ENCODE measurements at regions of chr15 and their contacts with region 1.

Region 1: DNA sequence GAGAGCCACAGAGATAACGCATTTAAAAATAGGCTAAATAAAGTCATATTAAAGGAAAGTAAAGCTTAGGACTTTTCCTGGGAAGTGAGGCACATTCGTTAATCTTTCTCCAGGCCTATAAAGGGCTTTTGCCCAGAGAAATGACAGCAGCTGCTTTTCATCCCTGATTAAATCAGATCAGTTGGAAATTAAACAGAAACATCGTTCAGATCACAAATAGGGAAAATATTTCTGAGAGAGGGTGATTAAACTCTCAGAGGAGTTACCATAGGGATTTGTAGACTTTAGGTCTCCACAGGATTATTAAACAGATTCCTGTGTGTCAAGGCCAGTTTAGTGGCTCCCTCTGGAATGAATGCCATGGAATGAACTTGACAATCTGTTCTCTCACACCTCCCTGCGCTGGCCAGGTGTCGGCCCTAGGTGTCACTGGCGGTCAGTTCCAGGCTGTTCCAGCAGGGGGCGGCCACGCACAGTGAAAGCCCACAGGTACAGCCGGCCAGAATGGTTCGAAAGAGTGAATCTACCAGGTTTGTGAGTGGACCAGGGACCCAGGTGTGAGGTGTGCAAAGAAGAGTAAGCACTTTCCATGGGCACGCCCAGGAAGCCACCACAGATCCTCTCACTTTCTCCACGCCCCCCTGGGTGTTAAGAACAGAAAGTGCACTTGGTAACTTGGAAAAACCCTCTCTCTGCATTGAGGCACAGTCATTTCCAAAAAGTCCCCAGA is 253.0 kb upstream of the RASGRP1 start:
- DNase-seq: peak; percentile 26 to 57
- ATAC-seq: peak; percentile 45 to 73
- H3K4me3 ChIP-seq: no peak overlapping the region
- H3K27ac ChIP-seq: no peak overlapping the region
- H3K4me1 ChIP-seq: no peaks in the 10 kb centered on the region
- H3K27me3 ChIP-seq: no peaks in the 10 kb centered on the region
- CTCF ChIP-seq: peak; percentile 89 to 95 (median 90)
- POLR2A ChIP-seq: no peak

Region 2: GRCh38 chr15:38991126-38991525 is 173.5 kb after region 1 on chr15:
- in situ Hi-C with region 1: loop called in 1 of 4 experiments (anchors 10 kb)
- intact Hi-C with region 1: loop called (anchors 10 kb)
- DNase-seq: no peak
- ATAC-seq: no peak
- H3K4me3 ChIP-seq: no peak overlapping the region
- H3K27ac ChIP-seq: no peak overlapping the region
- H3K4me1 ChIP-seq: peaks cover 9% of the 10 kb centered on the region in 2 donors
- H3K27me3 ChIP-seq: no peaks in the 10 kb centered on the region
- CTCF ChIP-seq: peak in 2 of 5 experiments; percentile 25 to 33
- POLR2A ChIP-seq: no peak

Region 3: GRCh38 chr15:39022532-39023305 is 205.1 kb after region 1 on chr15:
- in situ Hi-C with region 1: no loop called
- intact Hi-C with region 1: loop called (anchors 5 kb)
- DNase-seq: peak; percentile 14 to 22
- ATAC-seq: peak; percentile 80 to 93
- H3K4me3 ChIP-seq: no peak overlapping the region
- H3K27ac ChIP-seq: peak overlapping the region in 2 of 4 donors; percentile 24 to 51
- H3K4me1 ChIP-seq: peaks cover 3 to 27% of the 10 kb centered on the region in 2 donors
- H3K27me3 ChIP-seq: no peaks in the 10 kb centered on the region
- CTCF ChIP-seq: no peak
- POLR2A ChIP-seq: no peak

Region 4: GRCh38 chr15:39580117-39580484 is 762.5 kb after region 1 on chr15:
- in situ Hi-C with region 1: loop called (anchors 10 to 25 kb)
- intact Hi-C with region 1: loop called (anchors 1 kb)
- DNase-seq: peak; percentile 56 to 82
- ATAC-seq: peak; percentile 84 to 87
- H3K4me3 ChIP-seq: peak overlapping the region; percentile 55 to 63 (median 58)
- H3K27ac ChIP-seq: peak overlapping the region; percentile 66 to 75 (median 68)
- H3K4me1 ChIP-seq: peaks cover 7 to 12% of the 10 kb centered on the region in 2 donors
- H3K27me3 ChIP-seq: peaks cover 0 to 6% (median 4%) of the 10 kb centered on the region in 3 donors
- CTCF ChIP-seq: peak; percentile 83 to 90 (median 86)
- POLR2A ChIP-seq: no peak

Region 5: DNA sequence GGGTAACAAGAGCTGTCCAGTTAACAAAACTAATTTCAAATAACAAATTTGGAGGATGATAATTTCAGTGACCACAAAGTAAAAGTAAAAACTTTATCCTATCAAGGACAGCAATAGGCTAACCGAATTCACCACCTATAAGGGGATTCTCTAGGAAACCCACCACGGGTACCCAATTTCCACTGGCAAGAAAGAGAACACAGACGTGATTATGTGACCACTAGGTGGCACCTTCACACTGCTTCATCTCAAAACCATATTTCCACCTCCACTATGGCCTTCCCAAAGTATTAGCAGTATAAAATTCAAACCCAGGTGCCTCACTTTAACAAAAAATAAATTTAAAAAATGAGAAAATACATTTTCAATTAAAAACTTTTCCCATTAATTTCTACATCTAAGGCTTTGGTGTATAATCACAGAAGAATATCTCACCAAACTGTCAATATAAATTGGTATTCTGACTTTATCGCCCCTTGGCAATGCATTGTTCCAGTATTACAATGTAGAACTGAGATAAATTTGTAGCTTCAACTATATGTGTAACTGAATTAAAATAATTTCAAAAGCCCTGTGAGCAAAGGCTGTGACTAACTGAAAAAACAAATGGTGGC is 868.5 kb after region 1 on chr15:
- in situ Hi-C with region 1: no loop called
- intact Hi-C with region 1: loop called (anchors 10 kb)
- DNase-seq: peak in 1 of 2 donors; percentile 9
- ATAC-seq: peak; percentile 65 to 66
- H3K4me3 ChIP-seq: no peak overlapping the region
- H3K27ac ChIP-seq: no peak overlapping the region
- H3K4me1 ChIP-seq: no peaks in the 10 kb centered on the region
- H3K27me3 ChIP-seq: no peaks in the 10 kb centered on the region
- CTCF ChIP-seq: peak; percentile 63 to 76 (median 67)
- POLR2A ChIP-seq: no peak

Measured in gastrocnemius medialis (tissue), 4 donors.